ENCODE measurements at regions of chrX and their contacts with region 1.

Region 1: DNA sequence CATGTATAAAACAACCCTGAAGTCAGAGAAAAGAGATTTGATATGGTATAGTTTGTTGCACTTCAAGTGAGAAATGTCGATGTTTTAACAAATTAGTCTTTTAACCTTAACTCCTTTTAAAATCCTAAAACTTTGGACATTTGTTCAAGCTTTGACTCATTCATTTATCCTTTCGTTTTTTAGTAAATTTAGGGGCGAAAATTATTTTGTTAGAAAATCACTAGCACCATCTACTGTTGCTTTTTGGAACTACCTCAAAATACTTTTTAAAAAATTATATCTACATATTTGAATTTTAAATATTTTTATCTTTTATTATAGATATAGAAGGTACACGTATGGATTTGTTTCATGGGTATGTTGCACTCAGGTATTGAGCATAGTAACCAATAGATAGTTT is 165.1 kb upstream of the POF1B start:
- DNase-seq: no peak
- H3K4me3 ChIP-seq: no peak overlapping the region
- H3K27ac ChIP-seq: no peak overlapping the region
- H3K4me1 ChIP-seq: no peaks in the 10 kb centered on the region
- H3K27me3 ChIP-seq: peaks cover 0 to 3% (median 0%) of the 10 kb centered on the region in 4 donors
- CTCF ChIP-seq: peak in 2 of 3 experiments; percentile 34 to 43
- EP300 ChIP-seq: no peak
- POLR2A ChIP-seq: no peak

Region 2: DNA sequence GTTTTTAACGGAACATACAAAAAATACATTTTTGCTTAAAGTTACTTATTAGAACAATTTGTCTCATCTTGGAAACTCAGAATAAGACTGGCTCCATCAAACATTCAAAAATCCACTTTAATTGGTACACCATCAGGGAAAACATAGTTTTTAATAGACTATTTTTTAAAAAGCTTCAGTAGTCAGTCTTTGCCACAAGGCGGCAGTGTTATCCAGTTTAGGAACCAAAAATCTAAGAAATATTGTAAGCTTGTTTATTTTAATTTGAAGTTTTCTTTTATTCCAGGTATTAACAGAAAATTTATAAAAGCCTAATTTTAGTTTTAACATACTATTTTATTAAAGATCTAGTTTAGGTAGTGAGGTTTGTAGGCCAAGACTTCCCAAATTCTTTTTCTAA is 433.3 kb before region 1 on chrX:
- intact Hi-C with region 1: loop called (anchors 5 kb)
- DNase-seq: no peak
- H3K4me3 ChIP-seq: no peak overlapping the region
- H3K27ac ChIP-seq: no peak overlapping the region
- H3K4me1 ChIP-seq: no peaks in the 10 kb centered on the region
- H3K27me3 ChIP-seq: no peaks in the 10 kb centered on the region
- CTCF ChIP-seq: peak; percentile 44 to 57 (median 54)
- EP300 ChIP-seq: no peak
- POLR2A ChIP-seq: no peak

Region 3: DNA sequence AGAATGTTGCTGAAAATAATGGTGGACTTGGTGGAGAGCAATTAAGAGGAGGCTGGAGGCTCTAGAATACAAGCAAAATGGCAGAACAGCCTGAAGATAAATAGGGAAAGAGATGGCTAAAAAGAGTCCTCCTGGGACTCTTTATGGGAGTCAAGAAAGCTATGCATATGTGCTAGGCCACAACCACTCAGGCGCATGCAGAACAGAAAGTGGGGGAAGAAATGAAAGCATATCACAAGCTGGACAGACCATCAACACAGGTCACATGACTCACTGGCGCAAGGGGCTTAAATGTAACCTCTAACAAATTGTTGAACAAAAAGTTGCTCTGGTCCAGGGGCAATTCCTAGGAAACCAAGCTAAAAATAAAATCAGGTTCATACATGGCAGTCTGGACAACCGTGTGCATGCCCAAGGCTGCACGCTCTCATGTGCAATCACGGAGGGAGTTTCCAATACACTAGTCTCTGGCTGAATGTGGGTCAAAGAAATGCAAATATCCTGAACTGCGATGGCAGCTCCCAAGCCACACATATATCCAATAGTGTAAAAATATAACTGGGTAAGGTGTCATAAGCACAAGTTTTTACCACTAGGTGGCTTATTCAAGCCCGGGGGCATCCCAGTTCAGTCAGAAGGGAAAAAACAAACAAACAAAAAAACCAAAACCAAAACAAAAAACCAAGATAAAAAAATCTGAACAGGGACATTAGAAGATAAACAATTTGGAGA is 255.5 kb before region 1 on chrX:
- intact Hi-C with region 1: no loop called
- DNase-seq: no peak
- H3K4me3 ChIP-seq: no peak overlapping the region
- H3K27ac ChIP-seq: no peak overlapping the region
- H3K4me1 ChIP-seq: no peaks in the 10 kb centered on the region
- H3K27me3 ChIP-seq: no peaks in the 10 kb centered on the region
- CTCF ChIP-seq: no peak
- EP300 ChIP-seq: no peak
- POLR2A ChIP-seq: no peak

Measured in esophagus muscularis mucosa (tissue), 4 donors.